Endothelial cell of umbilical vein (primary cell): ENCODE measurements at regions of chr3 and their contacts with region 1.

Region 1: GRCh38 chr3:45387636-45388348 is 584 bp upstream of the LARS2 start:
- DNase-seq: no peak
- H3K4me3 ChIP-seq: peak overlapping the region; percentile 47 to 96 (median 73)
- H3K27ac ChIP-seq: no peak overlapping the region
- H3K4me1 ChIP-seq: peaks cover 16% of the 10 kb centered on the region
- H3K27me3 ChIP-seq: peaks cover 9 to 16% of the 10 kb centered on the region in 2 experiments
- CTCF ChIP-seq: no peak
- POLR2A ChIP-seq: no peak

Region 2: GRCh38 chr3:44845528-44846520 is 542.0 kb before region 1 on chr3:
- CTCF ChIA-PET with region 1: no interaction called
- POLR2A ChIA-PET with region 1: no interaction called
- dilution Hi-C with region 1: no loop called
- intact Hi-C with region 1: loop called (anchors 5 kb)
- DNase-seq: no peak
- H3K4me3 ChIP-seq: no peak overlapping the region
- H3K27ac ChIP-seq: no peak overlapping the region
- H3K4me1 ChIP-seq: no peaks in the 10 kb centered on the region
- H3K27me3 ChIP-seq: no peaks in the 10 kb centered on the region
- CTCF ChIP-seq: no peak
- POLR2A ChIP-seq: no peak

Region 3: GRCh38 chr3:45437383-45437782 is 49.6 kb after region 1 on chr3:
- CTCF ChIA-PET with region 1: no interaction called
- POLR2A ChIA-PET with region 1: no interaction called
- dilution Hi-C with region 1: no loop called
- intact Hi-C with region 1: loop called (anchors 1 kb)
- DNase-seq: peak; percentile 32
- H3K4me3 ChIP-seq: no peak overlapping the region
- H3K27ac ChIP-seq: no peak overlapping the region
- H3K4me1 ChIP-seq: peaks cover 27% of the 10 kb centered on the region
- H3K27me3 ChIP-seq: no peaks in the 10 kb centered on the region
- CTCF ChIP-seq: no peak
- POLR2A ChIP-seq: no peak